Spleen (tissue), 13 donors: ENCODE measurements at regions of chr11 and their contacts with region 1.

Region 1: GRCh38 chr11:57667736-57668435 is at the start of gene ZDHHC5:
- DNase-seq: peak; percentile 100
- H3K4me3 ChIP-seq: peak within 1 kb of the TSS; percentile 75 to 99 (median 88)
- H3K27ac ChIP-seq: peak within 1 kb of the TSS; percentile 96 to 100 (median 98)
- H3K4me1 ChIP-seq: peaks cover 20 to 60% (median 46%) of the 10 kb centered on the region in 6 donors
- H3K27me3 ChIP-seq: no peaks in the 10 kb centered on the region
- CTCF ChIP-seq: peak in 9 of 11 experiments; percentile 27 to 85 (median 77)
- POLR2A ChIP-seq: peak in 1 of 3 donors; percentile 62
- total RNA-seq, gene ZDHHC5: 41.5 to 58.0 (median 51.2) TPM

Region 2: GRCh38 chr11:57444362-57445121 is 223.3 kb before region 1 on chr11:
- intact Hi-C with region 1: no loop called
- DNase-seq: peak; percentile 2
- H3K4me3 ChIP-seq: no peak overlapping the region
- H3K27ac ChIP-seq: no peak overlapping the region
- H3K4me1 ChIP-seq: no peaks in the 10 kb centered on the region
- H3K27me3 ChIP-seq: peaks cover 0 to 17% (median 0%) of the 10 kb centered on the region in 7 donors
- CTCF ChIP-seq: no peak
- POLR2A ChIP-seq: no peak

Region 3: GRCh38 chr11:57698843-57699365 is 31.0 kb after region 1 on chr11:
- intact Hi-C with region 1: no loop called
- DNase-seq: no peak
- H3K4me3 ChIP-seq: no peak overlapping the region
- H3K27ac ChIP-seq: no peak overlapping the region
- H3K4me1 ChIP-seq: no peaks in the 10 kb centered on the region
- H3K27me3 ChIP-seq: no peaks in the 10 kb centered on the region
- CTCF ChIP-seq: no peak
- POLR2A ChIP-seq: no peak

Region 4: GRCh38 chr11:57792060-57792541 is 124.2 kb after region 1 on chr11:
- intact Hi-C with region 1: loop called (anchors 10 kb)
- DNase-seq: peak; percentile 96
- H3K4me3 ChIP-seq: peak overlapping the region in 4 of 8 donors; percentile 23 to 59 (median 27)
- H3K27ac ChIP-seq: peak overlapping the region; percentile 82 to 93 (median 90)
- H3K4me1 ChIP-seq: peaks cover 43 to 95% (median 80%) of the 10 kb centered on the region in 6 donors
- H3K27me3 ChIP-seq: no peaks in the 10 kb centered on the region
- CTCF ChIP-seq: no peak
- POLR2A ChIP-seq: peak in 1 of 3 donors; percentile 14